AG04449 (cell line): ENCODE measurements at regions of chr5 and their contacts with region 1.

Region 1: DNA sequence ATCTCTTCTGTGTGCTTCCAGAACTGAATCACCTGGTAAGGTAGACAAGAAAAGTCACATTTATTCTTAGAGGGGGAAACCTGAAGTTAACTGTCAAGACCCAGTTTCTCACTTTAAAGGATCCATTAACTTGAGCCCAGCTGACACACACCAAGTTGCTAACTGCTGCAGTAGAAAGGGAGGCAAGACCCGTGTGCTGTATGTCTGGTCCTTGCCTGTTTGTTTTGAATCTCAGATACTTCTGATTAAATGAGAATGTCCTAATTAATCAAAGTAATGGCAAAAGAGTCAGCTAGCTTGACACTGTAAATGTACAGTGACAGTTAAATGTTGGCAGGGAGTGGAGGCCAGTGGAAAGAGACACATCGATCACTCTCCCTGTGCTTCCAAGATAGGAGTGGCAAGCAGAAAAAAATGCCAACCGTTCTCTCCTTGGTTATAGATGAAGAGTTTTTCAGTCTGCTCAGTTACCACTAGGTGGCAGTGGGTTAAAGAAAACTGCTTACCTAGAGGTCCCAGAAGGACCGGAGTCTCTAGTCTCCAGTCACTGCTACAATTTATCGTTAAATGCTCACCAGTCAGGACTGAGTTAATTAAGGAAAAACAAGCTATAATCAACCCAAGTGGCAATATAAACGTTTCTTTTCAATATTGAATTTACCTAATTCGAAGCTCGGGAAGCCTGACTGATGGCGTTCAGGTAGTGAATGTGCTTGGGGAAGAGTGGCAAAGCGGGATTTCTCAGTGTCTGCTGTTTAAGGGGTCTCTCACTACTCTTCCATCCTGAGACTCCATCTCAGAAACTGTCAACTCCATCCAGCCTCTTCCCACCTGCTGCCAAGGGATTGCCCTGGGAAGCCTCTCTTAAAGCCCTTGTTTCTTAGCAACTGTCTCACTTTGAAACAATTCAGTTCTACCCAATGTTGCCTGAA is 18.4 kb downstream of the LSM11 start:
- DNase-seq: no peak
- H3K4me3 ChIP-seq: no peak overlapping the region
- CTCF ChIP-seq: peak; percentile 69

Region 2: DNA sequence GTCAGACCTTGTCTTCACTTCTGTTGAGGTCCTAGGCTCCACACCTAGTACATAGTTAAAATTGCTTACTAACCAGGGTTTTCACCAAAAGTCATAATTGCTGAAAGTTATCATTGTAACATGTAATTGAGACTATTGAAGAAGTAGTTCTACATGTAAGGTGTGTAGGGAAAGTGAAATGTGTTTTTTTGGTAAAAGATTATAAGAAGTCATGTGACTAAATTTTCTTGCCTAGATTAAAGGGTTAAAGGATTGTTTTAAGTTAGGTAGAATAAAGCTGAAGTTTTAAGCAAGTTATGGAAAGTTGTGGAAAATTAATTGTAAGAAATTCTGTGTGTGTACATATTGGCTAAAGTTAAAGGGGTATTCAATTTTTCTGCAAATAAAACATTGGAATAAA is 64.5 kb before region 1 on chr5:
- CTCF ChIA-PET with region 1: no interaction called
- POLR2A ChIA-PET with region 1: no interaction called
- DNase-seq: no peak
- H3K4me3 ChIP-seq: no peak overlapping the region
- CTCF ChIP-seq: no peak

Region 3: GRCh38 chr5:157772127-157772526 is 10.2 kb after region 1 on chr5:
- CTCF ChIA-PET with region 1: interaction called, 90 read pairs
- POLR2A ChIA-PET with region 1: no interaction called
- DNase-seq: no peak
- H3K4me3 ChIP-seq: no peak overlapping the region
- CTCF ChIP-seq: no peak

Region 4: DNA sequence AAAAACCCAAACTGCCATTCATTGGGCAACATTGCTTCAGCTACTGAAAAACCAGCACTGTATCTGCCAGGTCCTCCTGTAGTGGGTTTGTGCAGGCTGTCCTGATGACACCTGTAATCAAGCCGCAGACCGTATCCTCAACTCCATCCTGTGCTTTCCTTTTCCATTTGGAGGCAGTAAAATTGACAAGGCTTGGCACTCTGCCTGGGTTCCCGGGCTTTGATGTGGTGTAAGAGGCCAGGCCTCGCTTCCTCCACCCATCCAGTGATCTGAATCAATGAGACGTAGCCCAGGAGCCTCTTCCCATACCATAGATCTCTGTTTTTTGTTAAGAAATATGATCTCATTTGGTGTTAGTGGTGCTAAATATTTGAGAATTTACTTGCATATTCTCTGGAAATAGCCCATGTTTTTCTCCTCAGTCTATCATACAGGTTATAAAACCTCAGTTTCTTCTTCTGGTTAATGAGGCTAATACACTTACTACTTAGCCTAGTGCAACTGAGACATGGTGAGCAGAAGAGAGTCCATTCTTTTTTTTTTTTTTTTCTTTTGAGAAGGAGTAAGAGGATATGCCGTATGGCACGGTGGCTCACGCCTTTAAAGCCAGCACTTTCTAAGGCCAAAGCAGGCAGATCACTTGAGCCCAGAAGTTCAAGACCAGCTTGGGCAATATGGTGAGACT is 16.3 kb after region 1 on chr5:
- CTCF ChIA-PET with region 1: interaction called, 90 read pairs
- POLR2A ChIA-PET with region 1: no interaction called
- DNase-seq: no peak
- H3K4me3 ChIP-seq: no peak overlapping the region
- CTCF ChIP-seq: no peak

Region 5: DNA sequence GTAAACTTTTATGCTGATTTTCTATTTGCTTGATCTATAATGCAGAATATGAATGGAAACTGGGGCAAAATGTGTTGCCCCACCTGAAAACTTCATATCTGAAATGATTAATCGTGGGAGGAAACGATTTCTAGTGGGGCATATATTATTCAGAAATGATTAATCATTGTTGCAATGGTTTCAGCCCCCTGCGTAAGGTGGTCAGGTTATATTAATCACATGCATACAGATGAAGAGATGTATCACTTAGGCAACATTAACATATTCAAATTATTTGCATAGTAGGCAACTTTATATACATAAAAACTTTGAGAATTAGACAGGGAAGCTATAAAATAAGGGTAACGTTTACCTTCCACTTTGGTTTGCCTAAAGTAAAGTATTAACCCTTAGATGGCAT is 31.3 kb after region 1 on chr5:
- CTCF ChIA-PET with region 1: interaction called, 11 read pairs
- POLR2A ChIA-PET with region 1: no interaction called
- DNase-seq: no peak
- H3K4me3 ChIP-seq: no peak overlapping the region
- CTCF ChIP-seq: no peak

Region 6: DNA sequence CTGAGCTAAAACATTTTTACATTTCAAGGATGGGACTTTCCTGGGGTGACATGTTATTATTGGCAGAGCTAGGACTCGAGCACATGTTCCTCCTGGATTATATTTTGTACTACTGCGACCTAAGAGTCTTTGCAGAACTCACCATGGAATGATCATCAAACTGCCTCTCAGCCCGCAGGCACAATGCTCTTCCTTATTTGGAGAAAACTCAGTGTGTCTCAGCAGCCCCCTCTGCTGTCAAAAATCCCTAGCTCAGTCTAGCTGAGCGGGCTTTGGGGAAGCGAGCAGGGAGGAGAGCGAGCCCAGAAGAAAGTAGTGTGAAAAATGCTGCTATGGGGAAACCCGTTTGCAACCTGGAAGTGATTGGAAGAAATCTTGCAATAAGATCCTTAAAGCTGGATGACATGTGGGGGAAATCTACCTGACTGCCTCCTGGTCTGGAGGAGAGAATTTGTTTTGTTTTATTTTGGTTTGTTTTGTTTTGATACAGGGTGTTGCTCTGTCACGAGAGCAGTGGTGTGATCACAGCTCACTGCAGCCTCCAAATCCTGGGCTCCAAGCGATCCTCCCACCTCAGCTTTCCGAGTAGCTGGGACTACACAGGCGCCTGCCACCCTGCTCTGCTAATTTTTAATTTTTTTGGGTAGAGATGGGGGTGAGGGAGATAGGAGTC is 186.9 kb after region 1 on chr5:
- CTCF ChIA-PET with region 1: interaction called, 24 read pairs
- POLR2A ChIA-PET with region 1: no interaction called
- DNase-seq: peak; percentile 84
- H3K4me3 ChIP-seq: no peak overlapping the region
- CTCF ChIP-seq: peak; percentile 84

Region 7: GRCh38 chr5:157994906-157995519 is 233.1 kb after region 1 on chr5:
- CTCF ChIA-PET with region 1: interaction called, 73 read pairs
- POLR2A ChIA-PET with region 1: no interaction called
- DNase-seq: no peak
- H3K4me3 ChIP-seq: no peak overlapping the region
- CTCF ChIP-seq: peak; percentile 86

Region 8: DNA sequence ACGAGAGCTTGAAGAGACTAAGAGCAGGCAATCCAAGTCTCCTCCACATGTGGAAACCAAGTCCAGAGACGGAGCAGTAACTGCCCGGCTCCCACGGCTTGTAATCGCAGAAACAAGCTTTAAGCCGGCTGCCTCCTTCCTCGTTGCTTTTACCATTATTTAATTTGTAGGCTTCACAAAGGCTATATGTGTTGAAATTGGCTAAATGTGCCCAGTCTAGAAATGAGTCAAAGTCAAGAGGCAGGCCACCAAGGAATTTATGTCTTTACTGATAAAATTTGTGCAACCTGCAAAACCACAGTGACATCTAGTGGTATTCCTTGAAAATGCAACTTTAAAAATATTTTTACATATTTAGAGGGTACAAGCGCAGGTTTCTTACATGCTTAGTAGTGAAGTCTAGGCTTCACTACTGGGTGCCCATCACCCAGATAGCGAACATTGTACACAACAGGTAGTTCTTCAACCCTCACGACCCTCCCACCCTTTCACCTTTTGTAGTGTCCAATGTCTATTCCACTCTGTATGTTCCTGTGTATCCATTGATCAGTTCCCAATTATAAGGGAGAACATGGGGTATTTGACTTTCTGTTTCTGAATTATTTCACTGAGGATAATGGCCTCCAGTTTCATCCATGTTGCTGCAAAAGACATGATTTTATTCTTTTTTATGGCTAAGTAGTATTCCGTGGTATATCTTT is 1371.2 kb after region 1 on chr5:
- CTCF ChIA-PET with region 1: interaction called, 28 read pairs
- POLR2A ChIA-PET with region 1: no interaction called
- DNase-seq: peak; percentile 40
- H3K4me3 ChIP-seq: no peak overlapping the region
- CTCF ChIP-seq: peak; percentile 50